ENCODE measurements at regions of chr3 and their contacts with region 1.

Region 1: GRCh38 chr3:42229942-42230688 is 35.9 kb downstream of the CCK start:
- DNase-seq: no peak
- H3K4me3 ChIP-seq: peak overlapping the region; percentile 23; the same call in 1 of the 2 replicates
- CTCF ChIP-seq: peak; percentile 44

Region 2: GRCh38 chr3:41304593-41304992 is 925.5 kb before region 1 on chr3:
- CTCF ChIA-PET with region 1: no interaction called
- POLR2A ChIA-PET with region 1: no interaction called
- DNase-seq: no peak
- H3K4me3 ChIP-seq: no peak overlapping the region
- CTCF ChIP-seq: no peak

Region 3: GRCh38 chr3:42118762-42119361 is 111.3 kb before region 1 on chr3:
- CTCF ChIA-PET with region 1: interaction called, 13 read pairs
- POLR2A ChIA-PET with region 1: no interaction called
- DNase-seq: no peak
- H3K4me3 ChIP-seq: no peak overlapping the region
- CTCF ChIP-seq: peak; percentile 36

Region 4: GRCh38 chr3:42247576-42248027 is 17.5 kb after region 1 on chr3:
- CTCF ChIA-PET with region 1: interaction called, 32 read pairs
- POLR2A ChIA-PET with region 1: no interaction called
- DNase-seq: no peak
- H3K4me3 ChIP-seq: no peak overlapping the region
- CTCF ChIP-seq: peak; percentile 66

Region 5: GRCh38 chr3:42451546-42452230 is 221.6 kb after region 1 on chr3:
- CTCF ChIA-PET with region 1: interaction called, 25 read pairs
- POLR2A ChIA-PET with region 1: no interaction called
- DNase-seq: no peak
- H3K4me3 ChIP-seq: no peak overlapping the region
- CTCF ChIP-seq: no peak

Region 6: DNA sequence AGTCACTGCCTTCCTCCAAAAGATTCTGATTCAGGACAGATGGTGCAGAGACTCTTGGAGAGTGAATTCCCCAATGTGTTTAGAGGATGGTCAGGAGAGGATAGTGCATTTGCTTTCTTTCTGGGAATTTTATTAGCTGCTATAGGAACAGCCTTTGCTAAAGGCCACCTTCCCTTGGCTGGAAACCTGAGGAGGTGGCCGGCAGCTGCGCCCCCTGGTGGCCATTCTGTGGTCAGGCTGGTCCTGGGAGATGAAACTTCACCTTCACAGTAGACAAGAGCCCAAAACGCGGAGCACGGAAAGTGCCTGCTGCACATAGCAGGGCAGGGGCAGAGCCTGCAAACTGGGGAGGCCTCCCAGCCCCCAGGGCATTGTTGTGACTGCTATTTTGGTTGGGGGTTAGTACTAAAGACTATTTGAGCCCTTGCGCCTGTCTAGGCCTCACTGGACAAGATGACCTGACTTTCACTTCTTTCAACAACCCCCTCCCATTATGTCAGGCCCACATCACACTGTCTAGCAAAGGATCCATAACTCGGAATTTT is 317.4 kb after region 1 on chr3:
- CTCF ChIA-PET with region 1: interaction called, 52 read pairs
- POLR2A ChIA-PET with region 1: no interaction called
- DNase-seq: no peak
- H3K4me3 ChIP-seq: no peak overlapping the region
- CTCF ChIP-seq: peak; percentile 96

Measured in AG04449 (cell line).